Activated naive CD4-positive, alpha-beta T cell treated with anti-CD3 and anti-CD28 coated beads for 36 hours (primary cell): ENCODE measurements at regions of chr6 and their contacts with region 1.

Region 1: DNA sequence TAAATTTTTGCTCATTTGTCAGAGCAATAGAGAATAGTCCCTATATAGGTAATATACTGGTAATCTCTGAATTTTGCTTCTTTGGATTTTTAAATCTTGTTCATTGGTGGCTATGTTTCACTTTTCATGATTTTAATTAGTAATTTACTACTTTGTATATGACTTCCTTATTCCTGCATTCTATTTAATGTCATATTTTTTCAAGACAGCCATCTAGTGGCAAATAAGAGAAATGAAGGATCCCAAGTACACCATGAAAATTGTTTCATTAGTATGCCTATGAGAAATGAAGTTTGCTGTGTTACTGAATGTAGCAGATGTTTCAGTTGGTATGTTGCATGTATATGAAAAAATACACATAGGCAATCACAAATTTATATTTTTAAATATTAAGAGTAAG is 82.4 kb downstream of the ZNF292 start:
- DNase-seq: no peak
- H3K4me3 Mint-ChIP-seq: no peak overlapping the region
- H3K27ac Mint-ChIP-seq: no peak overlapping the region
- H3K4me1 Mint-ChIP-seq: peaks cover 4% of the 10 kb centered on the region
- H3K27me3 Mint-ChIP-seq: no peaks in the 10 kb centered on the region

Region 2: GRCh38 chr6:87078983-87079616 is 158.7 kb before region 1 on chr6:
- CTCF ChIA-PET with region 1: interaction called, 3 read pairs
- intact Hi-C with region 1: loop called (anchors 10 kb)
- DNase-seq: peak; percentile 69
- H3K4me3 Mint-ChIP-seq: no peak overlapping the region
- H3K27ac Mint-ChIP-seq: no peak overlapping the region
- H3K4me1 Mint-ChIP-seq: no peaks in the 10 kb centered on the region
- H3K27me3 Mint-ChIP-seq: peaks cover 24% of the 10 kb centered on the region

Region 3: DNA sequence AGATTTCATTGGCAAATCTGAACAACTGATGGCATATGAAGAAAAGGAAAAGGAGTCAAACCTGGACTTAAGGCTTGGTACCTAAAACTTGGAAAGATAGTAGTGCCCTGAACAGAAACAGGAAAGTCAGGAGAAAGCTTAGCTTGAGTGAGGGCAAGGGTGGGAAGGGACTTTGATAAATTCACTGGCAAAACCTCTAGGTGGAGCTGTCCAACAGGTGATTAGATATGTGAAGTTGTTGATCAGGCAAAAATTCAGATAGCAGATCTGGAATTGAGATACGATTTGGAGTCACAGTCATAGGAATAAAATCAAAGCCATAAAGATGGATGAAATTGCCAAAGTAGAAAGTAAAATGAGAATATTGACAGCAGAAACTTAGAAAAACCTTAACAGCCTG is 98.6 kb before region 1 on chr6:
- CTCF ChIA-PET with region 1: interaction called, 8 read pairs
- intact Hi-C with region 1: loop called (anchors 1 kb)
- DNase-seq: peak; percentile 60
- H3K4me3 Mint-ChIP-seq: no peak overlapping the region
- H3K27ac Mint-ChIP-seq: no peak overlapping the region
- H3K4me1 Mint-ChIP-seq: peaks cover 2% of the 10 kb centered on the region
- H3K27me3 Mint-ChIP-seq: peaks cover 7% of the 10 kb centered on the region

Region 4: GRCh38 chr6:87281426-87281825 is 43.6 kb after region 1 on chr6:
- CTCF ChIA-PET with region 1: no interaction called
- intact Hi-C with region 1: no loop called
- DNase-seq: no peak
- H3K4me3 Mint-ChIP-seq: no peak overlapping the region
- H3K27ac Mint-ChIP-seq: no peak overlapping the region
- H3K4me1 Mint-ChIP-seq: peaks cover 11% of the 10 kb centered on the region
- H3K27me3 Mint-ChIP-seq: no peaks in the 10 kb centered on the region